Naive thymus-derived CD4-positive, alpha-beta T cell (primary cell): ENCODE measurements at regions of chr17 and their contacts with region 1.

Region 1: DNA sequence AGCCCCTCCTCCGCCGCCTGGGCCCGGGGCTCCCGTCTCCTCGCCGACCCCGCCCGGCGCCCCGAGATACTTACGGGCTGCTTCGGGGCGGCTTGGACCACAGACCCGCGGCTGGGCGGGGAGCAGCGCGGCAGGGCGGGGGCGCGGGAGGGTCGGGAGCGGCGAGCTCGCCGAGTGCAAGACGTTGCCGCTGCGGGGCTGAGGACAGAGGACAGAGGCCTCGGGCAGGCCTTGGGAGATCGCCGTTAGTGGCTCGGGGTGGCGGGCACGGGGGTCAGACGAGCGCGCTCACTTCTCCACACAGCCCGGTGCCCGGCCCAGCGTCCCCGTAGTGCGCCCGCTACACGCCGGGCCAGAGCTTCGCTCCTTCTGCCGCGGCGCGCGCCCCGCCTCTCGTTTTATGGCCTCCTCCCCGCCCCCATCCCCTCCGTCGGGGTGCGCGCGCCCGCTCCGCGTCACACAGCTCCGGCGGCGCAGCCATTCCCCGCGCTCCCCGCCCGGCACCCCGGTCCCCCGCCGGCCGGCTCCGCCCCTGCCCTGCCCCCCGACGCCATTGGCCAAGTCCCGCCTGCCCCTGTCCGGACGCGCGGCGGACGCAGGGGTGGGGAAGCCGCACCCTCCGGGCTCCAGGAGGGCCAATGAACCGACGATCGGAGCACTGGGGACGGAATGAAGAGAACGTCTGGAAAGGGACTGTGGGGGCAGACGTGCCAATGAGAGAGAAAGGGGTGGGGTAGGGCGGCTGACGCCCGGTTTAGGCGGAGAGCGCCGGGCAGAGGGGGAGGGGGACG is at the start of gene TOB1:
- DNase-seq: peak; percentile 92 to 98 (median 95)
- ATAC-seq: peak; percentile 86
- H3K4me3 ChIP-seq: peak within 1 kb of the TSS; percentile 89
- H3K4me3 Mint-ChIP-seq: peak within 1 kb of the TSS; percentile 96 to 100 (median 100)
- H3K27ac ChIP-seq: peak within 1 kb of the TSS; percentile 98
- H3K27ac Mint-ChIP-seq: peak within 1 kb of the TSS; percentile 98 to 100 (median 100)
- H3K4me1 ChIP-seq: peaks cover 41 to 50% of the 10 kb centered on the region in 2 donors
- H3K4me1 Mint-ChIP-seq: peaks cover 31 to 65% (median 57%) of the 10 kb centered on the region in 7 donors
- H3K27me3 ChIP-seq: no peaks in the 10 kb centered on the region
- H3K27me3 Mint-ChIP-seq: peaks cover 0 to 2% (median 0%) of the 10 kb centered on the region in 5 donors
- total RNA-seq, gene TOB1: 51.5 to 261 (median 131) TPM

Region 2: GRCh38 chr17:50507871-50508572 is 358.2 kb before region 1 on chr17 and contains the start of gene MYCBPAP:
- CTCF ChIA-PET with region 1: no interaction called
- POLR2A ChIA-PET with region 1: no interaction called
- intact Hi-C with region 1: loop called in 1 of 2 experiments (anchors 1 kb)
- DNase-seq: peak; percentile 64 to 85 (median 71)
- ATAC-seq: peak; percentile 88
- H3K4me3 ChIP-seq: peak within 1 kb of the TSS; percentile 71
- H3K4me3 Mint-ChIP-seq: peak within 1 kb of the TSS; percentile 84 to 96 (median 93)
- H3K27ac ChIP-seq: peak within 1 kb of the TSS; percentile 75
- H3K27ac Mint-ChIP-seq: peak within 1 kb of the TSS; percentile 88 to 97 (median 94)
- H3K4me1 ChIP-seq: peaks cover 10 to 14% of the 10 kb centered on the region in 2 donors
- H3K4me1 Mint-ChIP-seq: peaks cover 0 to 52% (median 40%) of the 10 kb centered on the region in 7 donors
- H3K27me3 ChIP-seq: no peaks in the 10 kb centered on the region
- H3K27me3 Mint-ChIP-seq: peaks cover 0 to 9% (median 0%) of the 10 kb centered on the region in 5 donors
- total RNA-seq, gene MYCBPAP: 0.90 to 9.0 (median 8.6) TPM

Region 3: DNA sequence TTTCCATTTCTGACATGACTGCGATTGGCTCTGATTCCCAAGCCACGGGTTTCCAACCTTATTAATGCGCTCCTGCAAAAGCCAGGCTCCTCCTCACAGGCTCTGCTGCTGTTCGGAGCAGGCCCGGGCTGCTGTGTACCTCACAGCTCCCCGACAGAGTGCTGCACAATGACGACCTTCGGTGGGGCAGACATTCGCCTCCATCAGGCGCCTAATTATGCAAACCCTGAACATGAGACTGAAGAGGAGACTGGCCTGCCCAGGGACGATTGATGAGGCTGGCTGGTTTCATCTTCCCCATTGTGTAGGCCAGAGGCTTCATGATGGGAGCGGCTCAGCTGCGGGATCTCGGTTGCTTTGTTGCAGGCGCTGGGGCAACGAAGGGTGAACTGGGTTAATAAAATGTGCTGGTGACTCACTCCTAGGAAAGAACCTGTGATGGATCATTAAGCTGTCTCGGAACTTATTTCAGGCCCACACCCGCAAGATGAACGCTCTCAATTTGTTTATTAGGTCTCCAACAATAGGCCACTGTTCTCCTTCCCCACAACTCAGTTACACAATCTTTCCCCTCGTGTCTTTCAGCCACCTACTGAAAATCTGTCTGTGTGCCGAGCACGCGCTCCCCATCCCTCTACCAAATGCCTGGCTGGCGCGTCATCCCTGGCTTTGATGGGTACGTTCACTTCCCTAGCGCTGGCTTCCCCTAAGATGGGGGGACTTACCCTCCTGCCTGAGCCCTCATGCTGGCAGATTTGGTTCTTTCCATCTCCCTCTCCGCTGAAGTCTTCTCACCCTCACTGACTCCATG is 27.2 kb after region 1 on chr17:
- CTCF ChIA-PET with region 1: interaction called, 3 read pairs
- POLR2A ChIA-PET with region 1: interaction called, 828 read pairs
- intact Hi-C with region 1: no loop called
- DNase-seq: no peak
- ATAC-seq: no peak
- H3K4me3 ChIP-seq: no peak overlapping the region
- H3K4me3 Mint-ChIP-seq: no peak overlapping the region
- H3K27ac ChIP-seq: no peak overlapping the region
- H3K27ac Mint-ChIP-seq: no peak overlapping the region
- H3K4me1 ChIP-seq: no peaks in the 10 kb centered on the region
- H3K4me1 Mint-ChIP-seq: peaks cover 4 to 17% (median 6%) of the 10 kb centered on the region in 7 donors
- H3K27me3 ChIP-seq: no peaks in the 10 kb centered on the region
- H3K27me3 Mint-ChIP-seq: peaks cover 0 to 30% (median 0%) of the 10 kb centered on the region in 5 donors

Region 4: GRCh38 chr17:50931144-50931908 is 65.1 kb after region 1 on chr17:
- CTCF ChIA-PET with region 1: interaction called, 10 read pairs
- POLR2A ChIA-PET with region 1: interaction called, 828 read pairs
- intact Hi-C with region 1: loop called in 1 of 2 experiments (anchors 1 kb)
- DNase-seq: peak in 8 of 9 donors; percentile 47 to 73 (median 60)
- ATAC-seq: peak; percentile 69
- H3K4me3 ChIP-seq: peak overlapping the region; percentile 69
- H3K4me3 Mint-ChIP-seq: peak overlapping the region; percentile 84 to 97 (median 92)
- H3K27ac ChIP-seq: peak overlapping the region; percentile 63
- H3K27ac Mint-ChIP-seq: peak overlapping the region; percentile 77 to 100 (median 96)
- H3K4me1 ChIP-seq: peaks cover 20 to 21% of the 10 kb centered on the region in 2 donors
- H3K4me1 Mint-ChIP-seq: peaks cover 17 to 53% (median 33%) of the 10 kb centered on the region in 7 donors
- H3K27me3 ChIP-seq: no peaks in the 10 kb centered on the region
- H3K27me3 Mint-ChIP-seq: peaks cover 0 to 25% (median 0%) of the 10 kb centered on the region in 5 donors

Region 5: GRCh38 chr17:51120739-51121617 is 254.8 kb after region 1 on chr17 and contains the start of gene SPAG9:
- CTCF ChIA-PET with region 1: no interaction called
- POLR2A ChIA-PET with region 1: interaction called, 4 read pairs
- intact Hi-C with region 1: loop called (anchors 1 to 2 kb)
- DNase-seq: peak; percentile 87 to 97 (median 92)
- ATAC-seq: peak; percentile 92
- H3K4me3 ChIP-seq: peak within 1 kb of the TSS; percentile 97
- H3K4me3 Mint-ChIP-seq: peak within 1 kb of the TSS; percentile 87 to 99 (median 97)
- H3K27ac ChIP-seq: peak within 1 kb of the TSS; percentile 96
- H3K27ac Mint-ChIP-seq: peak within 1 kb of the TSS; percentile 95 to 100 (median 99)
- H3K4me1 ChIP-seq: peaks cover 28 to 35% of the 10 kb centered on the region in 2 donors
- H3K4me1 Mint-ChIP-seq: peaks cover 27 to 53% (median 49%) of the 10 kb centered on the region in 7 donors
- H3K27me3 ChIP-seq: no peaks in the 10 kb centered on the region
- H3K27me3 Mint-ChIP-seq: no peaks in the 10 kb centered on the region
- total RNA-seq, gene SPAG9: 52.6 to 73.4 (median 54.9) TPM

Region 6: DNA sequence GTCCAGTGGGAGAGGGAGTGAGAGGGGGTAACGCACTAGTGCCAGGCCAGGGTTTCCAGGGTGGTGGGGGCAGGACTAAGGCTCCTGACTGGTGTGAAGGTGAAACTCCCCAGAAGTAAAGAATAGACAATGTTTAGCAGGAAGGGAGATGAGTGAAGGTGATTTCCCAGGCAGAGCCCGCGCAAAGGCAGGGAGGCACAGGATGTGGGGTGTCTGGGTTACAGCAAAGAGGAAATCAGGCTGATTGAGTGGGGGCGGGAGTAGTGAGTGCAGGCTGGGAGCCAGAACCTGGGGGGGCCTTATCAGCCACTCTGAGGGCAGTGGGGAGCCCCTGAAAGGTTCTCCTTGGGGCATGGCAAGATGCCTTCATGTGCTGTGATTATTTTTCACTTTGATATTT is 561.7 kb after region 1 on chr17:
- CTCF ChIA-PET with region 1: no interaction called
- POLR2A ChIA-PET with region 1: no interaction called
- intact Hi-C with region 1: loop called in 1 of 2 experiments (anchors 5 kb)
- DNase-seq: peak; percentile 45 to 90 (median 72)
- ATAC-seq: peak; percentile 93
- H3K4me3 ChIP-seq: peak overlapping the region; percentile 32
- H3K4me3 Mint-ChIP-seq: peak overlapping the region; percentile 26 to 84 (median 78)
- H3K27ac ChIP-seq: peak overlapping the region; percentile 87
- H3K27ac Mint-ChIP-seq: peak overlapping the region; percentile 91 to 100 (median 97)
- H3K4me1 ChIP-seq: peaks cover 12 to 48% of the 10 kb centered on the region in 2 donors
- H3K4me1 Mint-ChIP-seq: peaks cover 34 to 77% (median 61%) of the 10 kb centered on the region in 7 donors
- H3K27me3 ChIP-seq: no peaks in the 10 kb centered on the region
- H3K27me3 Mint-ChIP-seq: no peaks in the 10 kb centered on the region